T-cell (primary cell): ENCODE measurements at regions of chr7 and their contacts with region 1.

Region 1: GRCh38 chr7:17887286-17887685 is 53.0 kb downstream of the SNX13 start:
- DNase-seq: no peak
- ATAC-seq: no peak
- H3K4me3 ChIP-seq: no peak overlapping the region
- H3K4me3 Mint-ChIP-seq: no peak overlapping the region
- H3K27ac ChIP-seq: no peak overlapping the region
- H3K27ac Mint-ChIP-seq: no peak overlapping the region
- H3K4me1 ChIP-seq: no peaks in the 10 kb centered on the region
- H3K4me1 Mint-ChIP-seq: no peaks in the 10 kb centered on the region
- H3K27me3 ChIP-seq: no peaks in the 10 kb centered on the region
- H3K27me3 Mint-ChIP-seq: no peaks in the 10 kb centered on the region

Region 2: GRCh38 chr7:17815318-17815717 is 72.0 kb before region 1 on chr7:
- CTCF ChIA-PET with region 1: no interaction called
- POLR2A ChIA-PET with region 1: no interaction called
- DNase-seq: no peak
- ATAC-seq: no peak
- H3K4me3 ChIP-seq: no peak overlapping the region
- H3K4me3 Mint-ChIP-seq: no peak overlapping the region
- H3K27ac ChIP-seq: no peak overlapping the region
- H3K27ac Mint-ChIP-seq: no peak overlapping the region
- H3K4me1 ChIP-seq: no peaks in the 10 kb centered on the region
- H3K4me1 Mint-ChIP-seq: peaks cover under 1 to 11% (median 7%) of the 10 kb centered on the region in 3 donors
- H3K27me3 ChIP-seq: no peaks in the 10 kb centered on the region
- H3K27me3 Mint-ChIP-seq: no peaks in the 10 kb centered on the region

Region 3: DNA sequence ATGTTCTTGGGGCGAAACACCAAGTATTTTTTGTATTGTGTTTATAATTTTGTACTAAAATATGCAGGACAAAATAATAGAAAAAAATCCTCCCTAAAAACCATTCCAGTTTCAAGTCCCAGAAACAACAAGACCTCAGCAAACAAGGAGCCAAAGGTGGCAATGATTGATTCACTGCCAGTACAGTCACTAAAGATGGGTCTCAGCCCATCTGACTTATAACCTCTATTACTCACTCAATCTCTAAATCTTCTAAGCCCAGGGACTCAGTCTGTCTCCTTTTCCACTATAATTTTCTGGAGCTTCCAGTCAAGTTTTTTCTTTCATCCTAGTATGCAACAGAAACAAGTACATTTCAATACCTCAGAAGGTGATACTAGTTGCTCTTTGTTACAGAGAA is 19.7 kb after region 1 on chr7:
- CTCF ChIA-PET with region 1: no interaction called
- POLR2A ChIA-PET with region 1: interaction called in 1 of 2 experiments, 11 read pairs
- DNase-seq: no peak
- ATAC-seq: no peak
- H3K4me3 ChIP-seq: no peak overlapping the region
- H3K4me3 Mint-ChIP-seq: no peak overlapping the region
- H3K27ac ChIP-seq: no peak overlapping the region
- H3K27ac Mint-ChIP-seq: no peak overlapping the region
- H3K4me1 ChIP-seq: peaks cover 0 to 4% of the 10 kb centered on the region in 2 experiments
- H3K4me1 Mint-ChIP-seq: peaks cover 56 to 57% (median 56%) of the 10 kb centered on the region in 3 donors
- H3K27me3 ChIP-seq: no peaks in the 10 kb centered on the region
- H3K27me3 Mint-ChIP-seq: no peaks in the 10 kb centered on the region